ENCODE measurements at regions of chr12 and their contacts with region 1.

Region 1: GRCh38 chr12:10562306-10562933 is 51.0 kb downstream of the MAGOHB start:
- DNase-seq: no peak
- H3K4me3 ChIP-seq: no peak overlapping the region
- H3K27ac ChIP-seq: no peak overlapping the region
- H3K4me1 ChIP-seq: no peaks in the 10 kb centered on the region
- H3K27me3 ChIP-seq: peaks cover 0 to 4% (median 0%) of the 10 kb centered on the region in 4 donors
- CTCF ChIP-seq: peak; percentile 71 to 75 (median 73)
- EP300 ChIP-seq: no peak
- POLR2A ChIP-seq: no peak

Region 2: GRCh38 chr12:10235761-10236631 is 326.4 kb before region 1 on chr12:
- intact Hi-C with region 1: loop called (anchors 2 kb)
- DNase-seq: no peak
- H3K4me3 ChIP-seq: no peak overlapping the region
- H3K27ac ChIP-seq: no peak overlapping the region
- H3K4me1 ChIP-seq: no peaks in the 10 kb centered on the region
- H3K27me3 ChIP-seq: no peaks in the 10 kb centered on the region
- CTCF ChIP-seq: peak; percentile 81 to 84 (median 84)
- EP300 ChIP-seq: no peak
- POLR2A ChIP-seq: no peak

Region 3: GRCh38 chr12:10331642-10332239 is 230.7 kb before region 1 on chr12:
- intact Hi-C with region 1: loop called (anchors 2 kb)
- DNase-seq: no peak
- H3K4me3 ChIP-seq: no peak overlapping the region
- H3K27ac ChIP-seq: no peak overlapping the region
- H3K4me1 ChIP-seq: no peaks in the 10 kb centered on the region
- H3K27me3 ChIP-seq: no peaks in the 10 kb centered on the region
- CTCF ChIP-seq: peak; percentile 51 to 65 (median 65)
- EP300 ChIP-seq: no peak
- POLR2A ChIP-seq: no peak

Region 4: DNA sequence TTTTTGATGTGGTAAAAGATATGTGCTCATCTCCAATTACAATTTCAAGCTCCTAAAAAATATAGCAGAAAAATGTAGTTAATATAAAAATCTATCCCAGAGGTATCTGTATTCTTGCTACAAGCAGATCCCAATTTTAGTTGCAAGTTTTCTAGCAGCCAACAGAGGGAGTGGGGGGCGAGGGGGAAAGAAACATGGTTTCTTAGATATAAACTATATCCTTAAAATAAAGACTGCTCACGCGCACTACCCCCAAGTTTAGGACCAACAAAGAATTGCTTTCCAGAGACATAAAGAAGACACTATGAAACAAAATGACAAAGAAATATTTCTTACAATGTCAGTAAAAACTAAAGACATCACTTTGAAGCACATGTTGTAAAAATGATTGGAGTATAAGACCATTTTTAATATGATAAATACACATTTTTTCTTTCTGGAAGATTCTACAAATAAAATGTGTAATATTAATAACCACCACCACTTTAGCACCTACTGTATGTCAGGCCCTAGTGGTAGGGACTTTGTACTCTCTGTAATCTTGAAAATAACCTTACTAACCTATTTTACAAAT is 45.6 kb after region 1 on chr12:
- intact Hi-C with region 1: no loop called
- DNase-seq: no peak
- H3K4me3 ChIP-seq: no peak overlapping the region
- H3K27ac ChIP-seq: no peak overlapping the region
- H3K4me1 ChIP-seq: peaks cover 0 to 18% (median 17%) of the 10 kb centered on the region in 4 donors
- H3K27me3 ChIP-seq: no peaks in the 10 kb centered on the region
- CTCF ChIP-seq: no peak
- EP300 ChIP-seq: no peak
- POLR2A ChIP-seq: no peak